ENCODE measurements at regions of chr20 and their contacts with region 1.

Region 1: GRCh38 chr20:49888345-49888966 is 26.9 kb downstream of the SPATA2 start:
- DNase-seq: peak; percentile 84
- CTCF ChIP-seq: peak; percentile 80

Region 2: GRCh38 chr20:49859846-49860245 is 28.6 kb before region 1 on chr20:
- CTCF ChIA-PET with region 1: interaction called, 17 read pairs
- POLR2A ChIA-PET with region 1: no interaction called
- DNase-seq: no peak
- CTCF ChIP-seq: no peak

Region 3: GRCh38 chr20:49872056-49872455 is 16.4 kb before region 1 on chr20:
- CTCF ChIA-PET with region 1: interaction called, 15 read pairs
- POLR2A ChIA-PET with region 1: no interaction called
- DNase-seq: no peak
- CTCF ChIP-seq: no peak

Region 4: GRCh38 chr20:49901588-49901987 is 13.1 kb after region 1 on chr20:
- CTCF ChIA-PET with region 1: interaction called, 12 read pairs
- POLR2A ChIA-PET with region 1: no interaction called
- DNase-seq: no peak
- CTCF ChIP-seq: no peak

Region 5: GRCh38 chr20:49915378-49916145 is 27.1 kb after region 1 on chr20 and contains the start of gene SPATA2:
- CTCF ChIA-PET with region 1: interaction called, 17 read pairs
- POLR2A ChIA-PET with region 1: no interaction called
- DNase-seq: peak; percentile 95
- CTCF ChIP-seq: no peak

Measured in GM10248 (cell line).